ENCODE measurements at regions of chr10 and their contacts with region 1.

Region 1: DNA sequence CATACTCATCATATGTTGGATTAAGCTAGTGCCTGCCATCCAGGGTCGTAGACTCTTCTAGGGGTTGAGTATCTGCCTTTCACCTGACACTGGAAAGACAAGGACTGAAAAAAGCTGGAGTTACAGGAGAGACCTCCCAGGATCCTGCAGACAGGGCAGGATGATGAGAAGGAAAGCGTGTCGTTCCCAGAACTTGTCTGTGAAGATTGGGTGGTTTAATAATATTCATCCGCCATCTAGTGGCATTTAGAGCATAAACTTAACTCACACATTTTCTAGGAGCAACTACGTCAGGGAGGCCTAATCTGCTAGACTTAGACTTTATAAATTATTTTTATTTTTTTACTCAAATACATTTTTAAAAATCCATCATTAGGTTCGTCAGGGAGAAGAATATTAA is 59.6 kb downstream of the ADRB1 start:
- DNase-seq: peak; percentile 23
- H3K4me3 ChIP-seq: no peak overlapping the region
- CTCF ChIP-seq: peak; percentile 30

Region 2: DNA sequence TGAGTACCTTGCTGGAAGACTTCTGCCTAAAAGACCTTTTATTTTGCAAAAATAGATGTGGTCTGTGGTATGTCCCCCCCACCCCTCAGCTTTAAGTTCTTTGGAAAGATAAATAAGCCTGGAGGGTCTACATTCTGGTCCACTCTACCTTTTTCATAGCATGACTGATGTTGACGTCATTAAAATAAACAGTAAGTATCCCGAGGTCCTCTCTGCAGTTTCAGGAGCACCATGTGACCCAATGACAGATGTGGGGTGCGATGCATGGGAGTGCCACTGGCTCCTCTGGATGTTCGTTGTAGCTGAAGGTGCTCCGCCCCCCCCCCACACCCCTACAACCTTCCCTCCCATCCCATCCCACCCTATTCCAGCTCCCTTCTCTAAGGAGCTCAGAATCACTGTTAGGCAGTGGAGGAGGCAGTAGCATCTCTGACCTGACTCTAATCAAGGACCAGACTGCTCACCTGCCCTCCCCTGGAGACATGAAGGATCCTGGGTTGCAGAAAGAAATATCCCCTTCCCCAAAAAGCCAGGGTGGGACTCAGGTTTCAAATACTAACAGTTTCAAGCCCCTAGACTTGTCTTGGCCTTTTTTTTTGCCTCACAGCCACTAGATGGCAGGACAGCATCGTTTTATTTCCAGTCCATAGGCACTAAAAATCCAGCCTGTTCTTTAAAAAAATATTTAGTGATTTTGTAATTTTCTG is 398.5 kb before region 1 on chr10:
- CTCF ChIA-PET with region 1: interaction called, 83 read pairs
- POLR2A ChIA-PET with region 1: no interaction called
- DNase-seq: no peak
- H3K4me3 ChIP-seq: no peak overlapping the region
- CTCF ChIP-seq: peak; percentile 63

Region 3: DNA sequence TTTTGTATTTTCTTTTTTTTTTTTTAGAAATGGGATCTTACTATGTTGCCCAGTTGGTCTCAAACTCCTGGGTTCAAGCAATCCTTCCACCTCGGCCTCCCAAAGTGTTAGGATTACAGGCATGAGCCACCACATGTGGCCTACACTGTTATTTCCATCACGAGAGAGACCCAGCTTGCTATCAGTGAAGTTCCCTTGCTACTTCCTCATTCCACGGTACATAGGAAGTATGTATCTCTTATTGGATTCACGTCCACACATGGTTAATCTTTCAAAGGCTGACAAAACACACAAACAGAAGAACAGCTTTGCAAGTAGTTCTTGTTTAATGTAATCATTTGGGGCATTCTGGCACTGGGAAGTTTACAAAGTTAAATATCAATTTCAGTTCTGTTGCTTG is 300.3 kb before region 1 on chr10:
- CTCF ChIA-PET with region 1: interaction called, 335 read pairs
- POLR2A ChIA-PET with region 1: no interaction called
- DNase-seq: no peak
- H3K4me3 ChIP-seq: no peak overlapping the region
- CTCF ChIP-seq: no peak

Region 4: DNA sequence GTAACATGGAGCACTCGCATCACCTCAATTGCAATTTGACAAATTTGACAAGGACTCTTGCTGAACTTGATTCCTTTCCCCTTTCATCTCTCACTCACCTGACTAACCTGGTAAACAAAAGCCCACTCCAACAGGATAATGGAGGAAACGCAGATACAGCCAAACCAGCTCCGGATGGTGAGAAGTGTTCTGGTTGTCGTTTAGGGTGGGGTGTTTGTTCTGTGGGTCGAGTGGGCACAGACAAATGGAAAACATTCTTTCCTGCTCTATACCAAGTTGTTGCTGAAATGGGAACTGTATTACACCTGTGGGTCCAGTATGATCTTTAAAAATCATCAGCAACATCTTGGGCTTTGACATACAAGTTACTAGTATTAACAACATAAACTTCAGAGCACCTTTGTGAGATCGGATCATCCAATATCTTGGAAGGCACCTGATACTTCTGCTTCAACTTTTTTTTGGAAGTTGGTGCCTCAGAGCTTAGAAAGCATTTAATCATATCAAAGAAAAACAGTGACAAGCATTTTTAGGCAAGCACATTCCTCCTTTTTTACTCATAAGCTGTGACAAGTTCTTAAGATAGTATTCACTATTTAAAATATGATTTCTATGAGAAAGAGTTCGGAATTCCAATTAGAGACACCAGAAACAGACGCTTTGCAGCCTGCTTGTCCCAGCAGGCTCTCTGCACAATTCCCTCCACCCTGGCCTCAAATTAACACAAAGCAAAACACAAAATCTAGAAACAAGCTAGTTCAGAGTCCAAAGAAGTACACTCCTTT is 12.6 kb after region 1 on chr10:
- CTCF ChIA-PET with region 1: interaction called, 16 read pairs
- POLR2A ChIA-PET with region 1: no interaction called
- DNase-seq: no peak
- H3K4me3 ChIP-seq: no peak overlapping the region
- CTCF ChIP-seq: no peak

Measured in AG04449 (cell line).